ENCODE measurements at regions of chr3 and their contacts with region 1.

Region 1: DNA sequence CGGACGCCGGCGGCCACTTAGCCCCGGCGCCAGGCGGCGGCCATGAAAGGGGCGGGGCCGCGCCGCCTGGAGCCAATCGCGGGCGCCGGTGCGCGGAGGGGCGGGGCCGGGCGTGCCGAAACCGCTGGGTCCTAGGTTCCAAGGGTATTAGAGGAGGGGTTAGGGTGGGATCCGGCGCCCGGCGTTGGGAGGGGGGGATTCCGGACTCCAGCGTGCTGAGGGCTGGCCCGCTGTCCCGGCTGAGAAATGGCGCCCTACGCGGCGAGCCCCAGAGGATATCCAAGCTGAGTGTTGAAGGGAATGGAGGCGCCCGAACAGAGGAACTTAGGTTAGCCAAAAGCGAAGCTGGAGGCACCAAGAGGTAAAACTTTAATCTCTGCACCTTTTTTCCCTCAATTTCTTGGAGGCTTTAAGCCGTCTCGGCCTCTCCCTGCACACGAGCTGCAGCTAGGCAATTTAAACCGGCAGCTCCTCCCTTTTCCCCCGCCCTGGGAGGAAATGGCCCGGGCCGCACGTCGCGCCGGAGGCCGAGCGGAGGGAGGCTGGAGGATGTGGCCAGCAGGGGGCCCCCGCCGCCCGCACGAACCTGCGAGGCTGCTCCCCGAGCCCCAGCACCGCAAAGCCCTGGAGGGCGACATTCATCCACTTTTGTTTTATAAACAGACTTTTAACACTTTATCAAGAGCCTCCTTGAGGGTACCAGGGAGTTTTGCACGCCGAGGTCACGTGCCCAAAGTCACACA is at the start of gene XXYLT1:
- DNase-seq: peak; percentile 82 to 93 (median 91)
- ATAC-seq: peak; percentile 93
- H3K4me3 ChIP-seq: peak within 1 kb of the TSS; percentile 97
- H3K4me3 Mint-ChIP-seq: peak within 1 kb of the TSS; percentile 82 to 91 (median 90)
- H3K27ac ChIP-seq: peak within 1 kb of the TSS; percentile 64
- H3K27ac Mint-ChIP-seq: peak within 1 kb of the TSS; percentile 63 to 89 (median 86)
- H3K4me1 ChIP-seq: peaks cover 16 to 22% of the 10 kb centered on the region in 2 donors
- H3K4me1 Mint-ChIP-seq: peaks cover 16 to 36% (median 29%) of the 10 kb centered on the region in 7 donors
- H3K27me3 ChIP-seq: no peaks in the 10 kb centered on the region
- H3K27me3 Mint-ChIP-seq: no peaks in the 10 kb centered on the region
- total RNA-seq, gene XXYLT1: 4.1 to 11.7 (median 9.1) TPM

Region 2: DNA sequence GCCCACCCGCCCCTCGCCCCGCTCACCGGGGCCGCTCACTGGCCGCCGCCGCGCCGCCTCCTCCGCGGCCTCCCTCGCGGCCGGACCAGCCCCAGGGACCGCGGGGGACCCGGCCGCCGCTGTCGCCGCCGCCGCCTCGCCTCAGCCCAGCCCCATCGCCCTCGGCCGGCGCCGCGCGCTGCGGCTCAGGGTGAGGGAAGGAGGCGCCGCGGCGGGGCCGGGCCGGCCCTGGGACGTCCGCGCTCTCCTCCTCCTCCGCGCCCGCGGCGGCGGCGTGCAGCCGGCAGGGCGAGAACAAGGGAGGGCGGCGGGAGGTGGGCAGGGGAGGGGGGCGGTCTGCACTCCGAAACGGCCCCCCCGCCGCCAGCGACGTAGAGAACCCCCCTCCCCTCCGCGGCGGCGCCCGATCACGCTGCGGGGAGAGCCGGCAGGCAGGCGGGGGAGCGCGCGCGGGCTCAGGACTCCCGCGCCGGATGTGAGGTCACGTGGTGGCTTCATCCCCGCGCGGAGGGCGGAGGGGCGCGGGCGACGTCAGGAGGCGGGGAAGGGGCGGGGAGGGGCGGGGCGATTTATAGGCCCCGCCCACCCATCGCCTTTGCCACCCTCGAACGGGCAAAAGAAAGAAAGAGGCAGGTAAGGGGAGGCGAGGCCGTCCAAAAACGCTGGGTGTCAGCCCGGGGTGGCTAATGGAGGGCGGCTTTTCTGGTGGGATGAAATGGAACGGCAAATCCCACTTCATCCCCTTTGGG is 784.6 kb before region 1 on chr3 and contains the start of gene ATP13A3:
- CTCF ChIA-PET with region 1: no interaction called
- POLR2A ChIA-PET with region 1: no interaction called
- intact Hi-C with region 1: loop called (anchors 5 kb)
- DNase-seq: peak; percentile 84 to 93 (median 91)
- ATAC-seq: peak; percentile 93
- H3K4me3 ChIP-seq: peak within 1 kb of the TSS; percentile 83
- H3K4me3 Mint-ChIP-seq: peak within 1 kb of the TSS; percentile 83 to 98 (median 93)
- H3K27ac ChIP-seq: peak within 1 kb of the TSS; percentile 82
- H3K27ac Mint-ChIP-seq: peak within 1 kb of the TSS; percentile 82 to 96 (median 94)
- H3K4me1 ChIP-seq: peaks cover 20 to 25% of the 10 kb centered on the region in 2 donors
- H3K4me1 Mint-ChIP-seq: peaks cover 41 to 60% (median 45%) of the 10 kb centered on the region in 7 donors
- H3K27me3 ChIP-seq: no peaks in the 10 kb centered on the region
- H3K27me3 Mint-ChIP-seq: no peaks in the 10 kb centered on the region
- total RNA-seq, gene ATP13A3: 46.5 to 81.8 (median 58.4) TPM

Region 3: DNA sequence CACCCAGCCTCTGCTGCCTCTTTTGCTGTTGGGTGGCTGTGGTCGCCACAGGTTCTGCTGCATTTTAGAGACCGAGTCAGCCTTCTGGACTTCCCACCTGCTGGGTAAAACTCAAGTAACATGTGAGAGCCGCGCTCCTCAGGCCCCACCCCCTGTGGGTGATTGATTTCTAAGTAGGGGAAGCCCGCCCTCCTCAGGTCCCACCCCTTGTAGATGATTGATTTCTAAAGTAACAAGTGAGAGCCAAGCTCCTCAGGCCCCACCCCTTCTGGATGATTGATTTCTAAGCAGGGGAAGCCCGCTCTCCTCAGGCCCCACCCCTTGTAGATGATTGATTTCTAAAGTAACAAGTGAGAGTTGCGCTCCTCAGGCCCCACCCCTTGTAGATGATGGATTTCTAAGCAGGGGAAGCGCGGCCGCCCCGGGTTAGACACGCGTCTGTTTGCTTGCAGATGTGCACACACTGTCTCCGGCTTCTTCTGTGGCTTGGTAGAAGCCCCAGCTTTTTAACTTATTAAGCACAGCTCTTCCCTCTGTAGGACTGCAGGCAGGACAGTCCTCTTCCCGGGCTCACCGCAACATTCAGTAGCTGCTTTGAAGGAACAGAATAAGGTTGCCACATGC is 502.2 kb before region 1 on chr3:
- CTCF ChIA-PET with region 1: no interaction called
- POLR2A ChIA-PET with region 1: no interaction called
- intact Hi-C with region 1: loop called in 1 of 2 experiments (anchors 1 kb)
- DNase-seq: peak; percentile 59 to 98 (median 93)
- ATAC-seq: peak; percentile 99
- H3K4me3 ChIP-seq: peak overlapping the region; percentile 70
- H3K4me3 Mint-ChIP-seq: peak overlapping the region; percentile 77 to 95 (median 88)
- H3K27ac ChIP-seq: peak overlapping the region; percentile 78
- H3K27ac Mint-ChIP-seq: peak overlapping the region; percentile 57 to 98 (median 94)
- H3K4me1 ChIP-seq: peaks cover 6 to 9% of the 10 kb centered on the region in 2 donors
- H3K4me1 Mint-ChIP-seq: peaks cover 8 to 35% (median 23%) of the 10 kb centered on the region in 7 donors
- H3K27me3 ChIP-seq: no peaks in the 10 kb centered on the region
- H3K27me3 Mint-ChIP-seq: peaks cover 0 to 23% (median 7%) of the 10 kb centered on the region in 5 donors

Region 4: GRCh38 chr3:195458316-195458717 is 187.0 kb after region 1 on chr3:
- CTCF ChIA-PET with region 1: interaction called, 3 read pairs
- POLR2A ChIA-PET with region 1: no interaction called
- intact Hi-C with region 1: loop called (anchors 1 kb)
- DNase-seq: peak in 7 of 9 donors; percentile 27 to 71 (median 52)
- ATAC-seq: peak; percentile 92
- H3K4me3 ChIP-seq: peak overlapping the region; percentile 45
- H3K4me3 Mint-ChIP-seq: peak overlapping the region; percentile 34 to 90 (median 77)
- H3K27ac ChIP-seq: peak overlapping the region; percentile 59
- H3K27ac Mint-ChIP-seq: peak overlapping the region; percentile 74 to 98 (median 94)
- H3K4me1 ChIP-seq: peaks cover 7 to 16% of the 10 kb centered on the region in 2 donors
- H3K4me1 Mint-ChIP-seq: peaks cover 7 to 37% (median 25%) of the 10 kb centered on the region in 7 donors
- H3K27me3 ChIP-seq: no peaks in the 10 kb centered on the region
- H3K27me3 Mint-ChIP-seq: peaks cover 0 to 5% (median 0%) of the 10 kb centered on the region in 5 donors

Region 5: GRCh38 chr3:195549931-195550519 is 278.7 kb after region 1 on chr3:
- CTCF ChIA-PET with region 1: interaction called, 12 read pairs
- POLR2A ChIA-PET with region 1: interaction called, 8 read pairs
- intact Hi-C with region 1: loop called in 1 of 2 experiments (anchors 2 kb)
- DNase-seq: peak; percentile 45 to 95 (median 94)
- ATAC-seq: peak; percentile 89
- H3K4me3 ChIP-seq: peak overlapping the region; percentile 43
- H3K4me3 Mint-ChIP-seq: peak overlapping the region; percentile 73 to 98 (median 90)
- H3K27ac ChIP-seq: peak overlapping the region; percentile 69
- H3K27ac Mint-ChIP-seq: peak overlapping the region; percentile 91 to 100 (median 99)
- H3K4me1 ChIP-seq: peaks cover 70 to 72% of the 10 kb centered on the region in 2 donors
- H3K4me1 Mint-ChIP-seq: peaks cover 44 to 93% (median 86%) of the 10 kb centered on the region in 7 donors
- H3K27me3 ChIP-seq: no peaks in the 10 kb centered on the region
- H3K27me3 Mint-ChIP-seq: no peaks in the 10 kb centered on the region

Region 6: DNA sequence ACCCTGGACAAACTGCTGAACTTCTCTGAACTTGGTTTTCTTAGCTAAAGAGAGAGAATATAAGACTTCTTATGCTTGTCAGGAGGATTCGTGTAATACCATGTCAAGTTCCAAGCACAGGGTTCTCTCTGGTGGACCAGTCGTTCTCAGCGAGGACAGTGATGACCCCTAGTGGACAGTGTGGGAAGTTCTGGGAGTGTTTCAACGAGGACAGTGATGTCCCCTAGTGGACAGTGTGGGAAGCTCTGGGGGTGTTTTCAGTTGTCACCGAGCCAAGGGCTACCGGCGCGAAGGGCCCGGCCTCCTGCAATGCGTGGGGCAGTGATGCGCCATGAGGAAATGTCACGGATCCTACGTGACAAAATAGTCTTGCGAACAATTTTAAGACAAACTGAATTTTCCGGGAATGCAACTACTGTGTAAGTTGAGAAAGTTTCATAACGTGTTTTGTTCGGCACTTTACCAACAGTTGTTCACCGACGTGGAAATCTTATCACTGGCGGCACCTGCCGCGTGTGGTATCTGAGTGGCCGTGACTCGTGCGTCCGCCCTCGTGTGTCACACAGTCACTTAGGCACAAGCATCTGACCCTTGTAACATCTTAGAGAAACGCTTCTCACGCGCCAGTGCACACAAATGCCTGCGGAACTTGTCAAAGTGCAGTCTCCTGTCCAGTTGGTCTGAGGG is 579.7 kb after region 1 on chr3:
- CTCF ChIA-PET with region 1: interaction called, 13 read pairs
- POLR2A ChIA-PET with region 1: interaction called, 3 read pairs
- intact Hi-C with region 1: loop called (anchors 1 to 5 kb)
- DNase-seq: peak; percentile 62 to 92 (median 86)
- ATAC-seq: peak; percentile 100
- H3K4me3 ChIP-seq: no peak overlapping the region
- H3K4me3 Mint-ChIP-seq: peak overlapping the region in 9 of 10 donors; percentile 31 to 76 (median 55)
- H3K27ac ChIP-seq: no peak overlapping the region
- H3K27ac Mint-ChIP-seq: peak overlapping the region in 3 of 9 donors; percentile 17 to 40 (median 20)
- H3K4me1 ChIP-seq: no peaks in the 10 kb centered on the region
- H3K4me1 Mint-ChIP-seq: peaks cover 2 to 24% (median 6%) of the 10 kb centered on the region in 7 donors
- H3K27me3 ChIP-seq: no peaks in the 10 kb centered on the region
- H3K27me3 Mint-ChIP-seq: peaks cover 0 to 3% (median 0%) of the 10 kb centered on the region in 5 donors

Region 7: GRCh38 chr3:195929452-195929851 is 658.2 kb after region 1 on chr3:
- CTCF ChIA-PET with region 1: no interaction called
- POLR2A ChIA-PET with region 1: no interaction called
- intact Hi-C with region 1: no loop called
- DNase-seq: no peak
- ATAC-seq: no peak
- H3K4me3 ChIP-seq: no peak overlapping the region
- H3K4me3 Mint-ChIP-seq: no peak overlapping the region
- H3K27ac ChIP-seq: no peak overlapping the region
- H3K27ac Mint-ChIP-seq: no peak overlapping the region
- H3K4me1 ChIP-seq: no peaks in the 10 kb centered on the region
- H3K4me1 Mint-ChIP-seq: peaks cover 0 to 2% (median 0%) of the 10 kb centered on the region in 7 donors
- H3K27me3 ChIP-seq: no peaks in the 10 kb centered on the region
- H3K27me3 Mint-ChIP-seq: peaks cover 0 to 4% (median 0%) of the 10 kb centered on the region in 5 donors

Measured in naive thymus-derived CD4-positive, alpha-beta T cell (primary cell).